HCT116 (cell line): ENCODE measurements at regions of chr12 and their contacts with region 1.

Region 1: GRCh38 chr12:98516184-98516873 is 939 bp downstream of the TMPO start:
- DNase-seq: peak; percentile 74
- ATAC-seq: peak; percentile 60
- H3K4me3 ChIP-seq: peak overlapping the region; percentile 75 to 85
- H3K27ac ChIP-seq: peak overlapping the region; percentile 98
- H3K4me1 ChIP-seq: peaks cover 8 to 18% of the 10 kb centered on the region in 2 experiments
- H3K27me3 ChIP-seq: no peaks in the 10 kb centered on the region
- CTCF ChIP-seq: peak; percentile 58 to 82 (median 73)
- POLR2A ChIP-seq: no peak
- RAD21 ChIP-seq: peak; percentile 89

Region 2: DNA sequence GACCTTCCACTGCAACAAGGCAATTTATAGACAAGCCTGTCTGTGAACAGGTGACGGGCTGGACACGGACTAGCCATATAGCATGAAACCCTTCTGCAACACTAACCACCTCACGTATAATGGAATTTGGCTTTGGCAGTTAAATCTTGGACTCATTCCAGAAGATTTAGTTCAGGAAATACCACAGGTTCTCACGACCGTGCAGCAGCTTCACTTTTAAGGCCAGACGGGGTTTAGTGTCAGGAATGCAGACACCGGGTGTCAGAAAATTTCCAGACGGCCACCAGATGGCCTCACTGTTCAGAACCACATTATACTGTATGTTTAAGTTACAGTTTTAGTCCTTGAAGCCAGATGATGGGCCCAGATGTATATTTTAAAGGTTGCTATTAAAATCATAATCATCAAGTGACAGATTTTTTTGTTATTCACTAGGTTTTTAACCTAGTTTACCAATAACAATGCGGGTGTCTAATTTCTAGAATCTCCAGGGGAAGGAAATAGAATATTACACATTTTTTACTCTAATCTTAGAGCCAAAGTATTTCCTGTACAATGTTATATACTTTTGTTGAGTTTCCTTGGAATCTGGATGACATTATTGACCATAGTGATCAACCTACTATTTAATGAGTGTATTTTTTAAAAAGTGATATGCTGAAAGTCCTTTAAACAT is 91.5 kb before region 1 on chr12:
- CTCF ChIA-PET with region 1: interaction called, 10 read pairs
- POLR2A ChIA-PET with region 1: no interaction called
- RAD21 ChIA-PET with region 1: no interaction called
- intact Hi-C with region 1: loop called (anchors 1 kb)
- DNase-seq: peak; percentile 57
- ATAC-seq: peak; percentile 83
- H3K4me3 ChIP-seq: no peak overlapping the region
- H3K27ac ChIP-seq: no peak overlapping the region
- H3K4me1 ChIP-seq: peaks cover 3 to 16% of the 10 kb centered on the region in 2 experiments; a peak in 3 of 4 replicates
- H3K27me3 ChIP-seq: no peaks in the 10 kb centered on the region
- CTCF ChIP-seq: peak; percentile 64 to 81 (median 79)
- POLR2A ChIP-seq: no peak
- RAD21 ChIP-seq: peak; percentile 78

Region 3: GRCh38 chr12:98490501-98491453 is 25.6 kb before region 1 on chr12:
- CTCF ChIA-PET with region 1: interaction called, 5 read pairs
- POLR2A ChIA-PET with region 1: interaction called, 4 read pairs
- RAD21 ChIA-PET with region 1: no interaction called
- intact Hi-C with region 1: loop called (anchors 1 kb)
- DNase-seq: peak; percentile 81
- ATAC-seq: peak; percentile 87
- H3K4me3 ChIP-seq: peak overlapping the region in 1 of 2 experiments; percentile 1; a peak in 1 of 4 replicates
- H3K27ac ChIP-seq: peak overlapping the region; percentile 57; the same call in 1 of the 2 replicates
- H3K4me1 ChIP-seq: peaks cover 21 to 27% of the 10 kb centered on the region in 2 experiments
- H3K27me3 ChIP-seq: no peaks in the 10 kb centered on the region
- CTCF ChIP-seq: peak; percentile 86 to 94 (median 88)
- POLR2A ChIP-seq: no peak
- RAD21 ChIP-seq: peak; percentile 82

Region 4: GRCh38 chr12:98951406-98951805 is 435.1 kb after region 1 on chr12:
- CTCF ChIA-PET with region 1: no interaction called
- POLR2A ChIA-PET with region 1: no interaction called
- RAD21 ChIA-PET with region 1: no interaction called
- intact Hi-C with region 1: no loop called
- DNase-seq: no peak
- ATAC-seq: no peak
- H3K4me3 ChIP-seq: no peak overlapping the region
- H3K27ac ChIP-seq: no peak overlapping the region
- H3K4me1 ChIP-seq: no peaks in the 10 kb centered on the region
- H3K27me3 ChIP-seq: peaks cover 18% of the 10 kb centered on the region
- CTCF ChIP-seq: no peak
- POLR2A ChIP-seq: no peak
- RAD21 ChIP-seq: no peak